T-cell (primary cell): ENCODE measurements at regions of chr2 and their contacts with region 1.

Region 1: GRCh38 chr2:42859006-42859552 is 66.7 kb upstream of the HAAO start:
- DNase-seq: peak in 33 of 35 experiments; percentile 10 to 73 (median 40)
- ATAC-seq: no peak
- H3K4me3 ChIP-seq: no peak overlapping the region
- H3K4me3 Mint-ChIP-seq: no peak overlapping the region
- H3K27ac ChIP-seq: no peak overlapping the region
- H3K27ac Mint-ChIP-seq: no peak overlapping the region
- H3K4me1 ChIP-seq: no peaks in the 10 kb centered on the region
- H3K4me1 Mint-ChIP-seq: no peaks in the 10 kb centered on the region
- H3K27me3 ChIP-seq: peaks cover 0 to 3% of the 10 kb centered on the region in 2 experiments
- H3K27me3 Mint-ChIP-seq: no peaks in the 10 kb centered on the region

Region 2: DNA sequence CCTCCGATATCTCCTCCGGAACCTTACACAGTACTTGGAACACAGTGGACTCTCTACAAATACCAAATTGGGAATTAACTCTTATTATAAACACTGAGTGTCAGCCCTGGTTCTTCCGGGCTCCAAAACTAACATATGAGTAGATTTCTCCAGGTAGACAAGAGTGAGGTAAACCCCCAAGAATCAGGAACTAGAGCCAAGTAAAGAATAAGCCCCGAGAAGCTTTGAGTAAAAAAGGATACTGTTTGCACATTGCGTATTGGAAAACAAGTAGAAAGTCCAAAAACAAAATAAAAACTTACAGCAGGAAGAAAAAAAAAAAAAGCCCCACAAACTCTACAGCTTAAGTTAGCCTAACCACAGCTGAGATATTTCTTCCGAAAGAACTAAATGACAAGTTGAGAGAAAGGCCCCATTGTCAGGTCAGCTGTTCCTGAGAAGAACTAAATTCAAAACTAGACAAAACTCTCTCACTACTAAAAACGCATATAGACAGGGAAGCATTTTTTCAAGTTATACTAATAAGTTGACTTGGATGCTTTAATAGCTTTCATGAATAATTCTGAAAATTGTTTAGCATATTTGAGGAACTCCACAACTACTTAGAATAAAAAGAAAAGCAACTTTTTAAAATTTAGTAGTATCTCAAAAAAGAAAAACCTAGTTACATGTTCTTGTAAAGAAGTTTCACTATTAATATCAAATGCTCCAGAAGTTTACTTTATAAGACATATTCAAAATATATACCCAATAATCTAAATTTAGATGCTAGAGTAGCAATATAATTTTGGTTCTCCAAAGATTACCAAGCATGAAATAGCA is 62.4 kb before region 1 on chr2:
- CTCF ChIA-PET with region 1: no interaction called
- POLR2A ChIA-PET with region 1: no interaction called
- DNase-seq: no peak
- ATAC-seq: no peak
- H3K4me3 ChIP-seq: no peak overlapping the region
- H3K4me3 Mint-ChIP-seq: no peak overlapping the region
- H3K27ac ChIP-seq: no peak overlapping the region
- H3K27ac Mint-ChIP-seq: peak overlapping the region in 1 of 2 donors; percentile 26
- H3K4me1 ChIP-seq: peaks cover 22 to 27% of the 10 kb centered on the region in 2 experiments
- H3K4me1 Mint-ChIP-seq: peaks cover 27 to 42% (median 37%) of the 10 kb centered on the region in 3 donors
- H3K27me3 ChIP-seq: peaks cover 0 to 36% of the 10 kb centered on the region in 2 experiments
- H3K27me3 Mint-ChIP-seq: peaks cover under 1 to 24% of the 10 kb centered on the region in 2 donors

Region 3: DNA sequence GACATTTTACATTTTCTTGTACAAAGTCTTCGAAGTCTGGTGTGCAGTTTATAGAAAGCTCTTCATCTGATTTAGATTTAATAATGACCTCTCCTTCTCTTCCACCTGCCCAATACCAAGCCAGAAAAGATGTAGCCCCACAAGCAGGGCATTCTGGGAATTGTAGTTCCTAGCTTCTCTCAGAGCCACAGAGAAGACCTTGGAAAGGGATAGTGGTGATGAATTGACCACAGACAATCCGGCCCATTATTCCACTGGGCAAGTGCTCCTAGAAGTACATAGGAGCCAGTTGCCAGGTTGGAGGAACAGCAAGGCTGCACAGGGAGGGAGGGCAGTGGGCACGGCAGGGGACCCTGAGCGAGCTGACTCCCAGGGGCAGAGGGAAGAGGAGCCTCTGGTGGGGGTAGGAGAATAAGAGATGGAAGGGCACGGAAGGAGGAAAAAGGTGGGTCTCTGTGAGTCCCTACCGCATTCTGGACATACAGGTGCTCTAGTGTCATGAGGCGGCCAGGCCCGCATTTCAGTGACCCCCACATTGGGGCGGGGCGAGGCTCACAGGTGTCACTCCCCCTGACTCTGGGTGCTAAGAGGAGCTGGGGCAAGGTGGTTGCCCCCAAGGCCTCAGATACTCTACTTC is 85.8 kb after region 1 on chr2:
- CTCF ChIA-PET with region 1: no interaction called
- POLR2A ChIA-PET with region 1: no interaction called
- DNase-seq: no peak
- ATAC-seq: no peak
- H3K4me3 ChIP-seq: no peak overlapping the region
- H3K4me3 Mint-ChIP-seq: no peak overlapping the region
- H3K27ac ChIP-seq: no peak overlapping the region
- H3K27ac Mint-ChIP-seq: no peak overlapping the region
- H3K4me1 ChIP-seq: no peaks in the 10 kb centered on the region
- H3K4me1 Mint-ChIP-seq: peaks cover 0 to 5% (median 2%) of the 10 kb centered on the region in 3 donors
- H3K27me3 ChIP-seq: peaks cover 0 to 12% of the 10 kb centered on the region in 2 experiments
- H3K27me3 Mint-ChIP-seq: no peaks in the 10 kb centered on the region

Region 4: GRCh38 chr2:43542285-43542937 is 683.3 kb after region 1 on chr2:
- CTCF ChIA-PET with region 1: interaction called, 4 to 11 read pairs
- POLR2A ChIA-PET with region 1: no interaction called
- DNase-seq: peak in 2 of 35 experiments; percentile 5 to 68
- ATAC-seq: peak; percentile 43 to 94 (median 50)
- H3K4me3 ChIP-seq: no peak overlapping the region
- H3K4me3 Mint-ChIP-seq: no peak overlapping the region
- H3K27ac ChIP-seq: no peak overlapping the region
- H3K27ac Mint-ChIP-seq: no peak overlapping the region
- H3K4me1 ChIP-seq: peaks cover 2 to 4% of the 10 kb centered on the region in 2 experiments
- H3K4me1 Mint-ChIP-seq: peaks cover 14 to 16% (median 14%) of the 10 kb centered on the region in 3 donors
- H3K27me3 ChIP-seq: no peaks in the 10 kb centered on the region
- H3K27me3 Mint-ChIP-seq: no peaks in the 10 kb centered on the region